Aorta (tissue), 5 donors: ENCODE measurements at regions of chr5 and their contacts with region 1.

Region 1: DNA sequence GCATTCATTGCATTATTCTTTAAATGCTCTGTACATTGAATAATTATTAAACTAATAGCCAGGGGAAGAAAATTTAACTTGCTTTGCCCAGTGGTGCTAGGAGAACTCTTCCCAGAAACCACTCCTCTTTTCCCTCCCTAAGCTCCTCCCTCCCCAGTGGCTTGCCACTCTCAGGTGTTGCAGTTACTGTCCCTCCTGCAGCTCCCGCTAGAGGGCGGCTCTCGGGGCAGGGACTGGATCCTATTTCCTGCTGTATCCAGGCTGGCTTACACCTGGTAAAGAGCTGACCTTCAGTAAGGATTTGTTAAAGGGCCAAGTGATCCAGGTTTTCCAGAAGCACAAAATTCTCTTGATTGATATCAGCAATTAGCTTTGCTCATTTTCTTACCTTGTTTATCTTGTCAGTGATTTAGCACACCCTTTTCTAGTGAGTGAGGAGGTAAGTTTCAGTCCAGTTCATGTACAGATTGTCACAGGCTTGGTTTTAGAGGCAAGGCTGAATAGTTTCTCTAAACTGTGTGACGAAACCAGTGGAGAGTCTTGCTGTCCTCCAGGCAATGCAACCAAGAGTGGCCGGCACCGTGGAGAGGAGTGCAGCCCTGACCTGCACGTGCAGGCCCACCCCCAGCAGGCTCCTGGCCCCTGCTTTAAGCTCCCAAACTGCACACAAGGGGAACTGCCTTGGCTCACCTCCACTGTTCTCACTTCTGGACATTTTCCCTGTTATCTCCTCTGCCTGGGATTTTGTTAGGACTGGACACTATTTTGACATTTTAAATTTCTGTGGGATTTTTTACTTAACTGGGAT is 423.8 kb downstream of the SPOCK1 start:
- DNase-seq: no peak
- ATAC-seq: no peak
- H3K4me3 ChIP-seq: no peak overlapping the region
- H3K27ac ChIP-seq: no peak overlapping the region
- H3K4me1 ChIP-seq: no peaks in the 10 kb centered on the region
- H3K27me3 ChIP-seq: no peaks in the 10 kb centered on the region

Region 2: DNA sequence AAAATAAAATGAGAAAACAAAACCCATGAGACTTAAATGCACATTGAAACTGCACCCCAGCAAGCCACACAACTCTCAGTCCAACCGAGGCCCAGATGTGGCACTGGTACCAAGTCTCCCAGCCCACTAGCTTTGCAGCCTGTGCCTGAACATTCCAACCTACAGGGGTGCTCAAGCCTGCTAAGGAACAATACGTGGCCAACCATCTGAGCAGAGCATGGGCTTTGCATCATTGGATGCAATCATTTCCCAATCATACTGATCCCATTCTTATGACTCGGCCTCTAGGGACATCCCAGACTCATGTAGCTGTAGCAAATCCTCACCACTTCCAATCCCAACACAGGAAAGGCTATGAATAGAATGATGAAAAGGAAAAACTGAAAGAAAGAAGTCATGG is 126.5 kb after region 1 on chr5:
- intact Hi-C with region 1: loop called in 1 of 2 experiments (anchors 10 kb)
- DNase-seq: peak in 1 of 2 donors; percentile 50
- ATAC-seq: peak; percentile 80
- H3K4me3 ChIP-seq: no peak overlapping the region
- H3K27ac ChIP-seq: no peak overlapping the region
- H3K4me1 ChIP-seq: no peaks in the 10 kb centered on the region
- H3K27me3 ChIP-seq: no peaks in the 10 kb centered on the region

Region 3: GRCh38 chr5:137320056-137321045 is 245.0 kb after region 1 on chr5:
- intact Hi-C with region 1: loop called in 1 of 2 experiments (anchors 5 kb)
- DNase-seq: no peak
- ATAC-seq: peak; percentile 80
- H3K4me3 ChIP-seq: no peak overlapping the region
- H3K27ac ChIP-seq: no peak overlapping the region
- H3K4me1 ChIP-seq: peaks cover 0 to 4% of the 10 kb centered on the region in 2 donors
- H3K27me3 ChIP-seq: no peaks in the 10 kb centered on the region